ENCODE measurements at regions of chr10 and their contacts with region 1.

Region 1: GRCh38 chr10:123380497-123381085 is 226.4 kb downstream of the BUB3 start:
- DNase-seq: no peak
- H3K4me3 Mint-ChIP-seq: no peak overlapping the region
- H3K27ac Mint-ChIP-seq: no peak overlapping the region
- H3K4me1 Mint-ChIP-seq: no peaks in the 10 kb centered on the region
- H3K27me3 Mint-ChIP-seq: peaks cover 25% of the 10 kb centered on the region
- CTCF ChIP-seq: no peak

Region 2: DNA sequence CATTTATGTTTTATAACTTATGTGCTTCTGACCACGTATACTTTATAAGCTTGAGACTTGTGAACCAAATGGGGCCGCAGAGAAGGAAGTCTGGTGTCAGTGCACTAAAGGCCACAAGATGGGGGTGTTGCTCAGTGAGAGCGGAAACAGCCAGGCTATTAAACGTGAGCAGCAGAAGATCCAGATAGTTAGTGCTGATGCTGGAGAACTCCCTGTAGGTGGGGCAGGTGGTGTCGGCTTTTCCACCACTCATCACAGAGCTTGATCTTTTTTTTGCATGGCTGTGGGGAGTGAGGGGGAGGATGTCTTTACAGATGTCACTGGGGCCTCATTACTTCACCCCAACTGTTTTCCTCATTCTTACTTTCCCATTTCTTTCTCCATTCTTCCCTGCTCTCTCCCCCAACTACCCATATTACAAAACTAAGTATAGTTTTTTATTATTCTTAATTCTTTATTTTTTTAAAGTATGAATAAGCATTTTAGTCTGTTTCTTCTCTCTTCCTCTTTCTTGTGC is 337.1 kb before region 1 on chr10:
- CTCF ChIA-PET with region 1: interaction called, 5 read pairs
- intact Hi-C with region 1: loop called (anchors 1 kb)
- DNase-seq: peak; percentile 51
- H3K4me3 Mint-ChIP-seq: no peak overlapping the region
- H3K27ac Mint-ChIP-seq: no peak overlapping the region
- H3K4me1 Mint-ChIP-seq: no peaks in the 10 kb centered on the region
- H3K27me3 Mint-ChIP-seq: no peaks in the 10 kb centered on the region
- CTCF ChIP-seq: peak; percentile 58

Region 3: DNA sequence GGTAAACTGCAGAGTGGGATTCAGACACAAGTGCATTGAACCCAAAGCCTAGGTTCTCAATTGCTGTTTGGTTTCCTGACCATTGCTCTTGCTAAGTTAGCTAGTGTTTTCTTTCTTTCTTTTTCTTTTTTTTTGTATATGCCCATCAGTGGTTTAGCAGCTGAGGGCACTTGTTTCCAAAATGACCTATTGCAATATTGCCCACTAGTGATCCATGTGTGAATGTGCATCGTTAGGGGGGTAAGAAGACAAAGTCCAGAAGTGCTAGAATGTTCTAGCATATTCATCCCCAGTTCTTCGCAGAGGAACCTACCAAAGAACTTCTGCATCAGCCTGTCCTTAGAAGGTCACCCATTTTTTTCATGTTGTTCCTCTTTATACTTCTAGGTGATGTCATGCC is 32.8 kb after region 1 on chr10:
- CTCF ChIA-PET with region 1: no interaction called
- intact Hi-C with region 1: no loop called
- DNase-seq: no peak
- H3K4me3 Mint-ChIP-seq: no peak overlapping the region
- H3K27ac Mint-ChIP-seq: no peak overlapping the region
- H3K4me1 Mint-ChIP-seq: no peaks in the 10 kb centered on the region
- H3K27me3 Mint-ChIP-seq: peaks cover 11% of the 10 kb centered on the region
- CTCF ChIP-seq: no peak

Measured in Calu3 (cell line).